ENCODE measurements at regions of chr10 and their contacts with region 1.

Region 1: DNA sequence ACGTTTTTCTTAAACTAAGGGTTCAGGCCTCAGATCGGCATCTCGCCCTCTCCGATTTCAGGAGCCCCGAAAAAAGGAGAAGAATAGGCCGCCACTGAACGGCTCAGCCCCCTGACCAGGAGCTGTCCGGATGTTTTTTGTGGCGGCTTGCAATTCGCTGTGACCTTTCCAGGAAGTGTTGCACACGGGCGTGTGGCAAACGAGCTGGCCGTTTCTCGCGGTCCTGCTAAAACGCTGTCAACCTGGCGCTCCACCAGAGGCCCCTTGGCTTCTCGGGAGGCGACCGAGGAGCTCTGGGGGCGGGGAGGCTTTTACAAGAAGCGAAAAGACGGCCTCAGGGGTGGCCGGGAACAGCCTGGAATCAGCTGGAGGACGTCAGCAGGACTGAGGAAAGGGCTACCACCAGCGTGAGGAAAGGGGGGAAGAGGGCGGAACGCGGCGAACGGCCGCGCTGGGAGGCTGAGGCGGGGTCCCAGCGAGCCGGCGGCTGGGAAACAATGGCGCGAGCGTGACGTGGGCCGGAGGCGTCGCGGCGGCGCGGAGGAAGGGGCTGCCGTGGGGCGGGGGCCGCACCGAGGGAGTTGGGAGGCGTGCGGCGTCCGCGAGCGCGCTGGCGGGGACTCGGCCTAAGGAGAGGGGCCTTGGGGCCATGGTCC is 493 bp downstream of the NT5C2 start:
- DNase-seq: peak; percentile 73
- H3K4me3 ChIP-seq: peak overlapping the region; percentile 84 to 89 (median 88)
- H3K27ac ChIP-seq: peak overlapping the region; percentile 86
- H3K4me1 ChIP-seq: peaks cover 7% of the 10 kb centered on the region
- H3K27me3 ChIP-seq: no peaks in the 10 kb centered on the region
- CTCF ChIP-seq: no peak

Region 2: DNA sequence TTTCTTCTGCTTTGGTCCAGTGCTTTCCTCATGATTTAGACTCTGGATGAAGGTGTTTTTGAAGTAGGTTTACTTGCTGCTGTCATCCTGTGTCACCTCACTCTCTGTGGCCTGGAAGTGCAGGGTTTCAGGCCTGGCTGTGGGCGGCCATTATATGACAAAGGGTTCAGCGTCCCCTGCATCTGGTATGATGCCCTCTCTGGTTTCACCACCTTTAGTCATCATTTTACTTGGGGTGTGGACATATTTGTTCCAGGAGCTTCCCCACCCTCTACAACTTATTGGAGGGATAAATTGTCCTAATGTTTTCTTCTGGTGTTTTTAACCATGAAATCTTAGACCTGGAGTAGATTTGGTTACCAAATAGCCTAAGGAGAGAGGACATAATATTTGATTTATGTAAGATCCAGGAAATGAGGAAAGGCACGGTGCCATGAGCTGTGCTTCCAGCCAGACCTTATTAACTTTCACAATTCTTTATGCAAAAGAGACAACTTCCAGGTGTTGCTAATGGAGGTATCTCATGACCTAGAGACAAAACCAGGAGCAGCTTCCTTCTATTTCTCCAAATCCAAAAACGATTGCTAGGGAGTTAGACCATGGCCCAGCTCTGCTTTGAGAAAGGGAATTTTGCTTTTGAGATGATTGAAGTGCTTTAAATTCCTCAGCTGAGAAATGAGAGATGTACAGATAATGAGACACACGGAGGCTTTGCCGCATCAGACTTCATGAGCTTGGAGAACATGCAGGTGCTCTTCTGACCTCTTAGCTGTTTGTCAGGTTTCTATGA is 428.0 kb before region 1 on chr10:
- CTCF ChIA-PET with region 1: no interaction called
- dilution Hi-C with region 1: no loop called
- in situ Hi-C with region 1: no loop called
- intact Hi-C with region 1: no loop called
- DNase-seq: no peak
- H3K4me3 ChIP-seq: no peak overlapping the region
- H3K27ac ChIP-seq: no peak overlapping the region
- H3K4me1 ChIP-seq: peaks cover 16% of the 10 kb centered on the region
- H3K27me3 ChIP-seq: no peaks in the 10 kb centered on the region
- CTCF ChIP-seq: no peak

Region 3: GRCh38 chr10:102988404-102989314 is 203.9 kb before region 1 on chr10:
- CTCF ChIA-PET with region 1: no interaction called
- dilution Hi-C with region 1: no loop called
- in situ Hi-C with region 1: no loop called
- intact Hi-C with region 1: no loop called
- DNase-seq: no peak
- H3K4me3 ChIP-seq: no peak overlapping the region
- H3K27ac ChIP-seq: no peak overlapping the region
- H3K4me1 ChIP-seq: no peaks in the 10 kb centered on the region
- H3K27me3 ChIP-seq: no peaks in the 10 kb centered on the region
- CTCF ChIP-seq: no peak

Region 4: GRCh38 chr10:103145860-103146466 is 46.6 kb before region 1 on chr10:
- CTCF ChIA-PET with region 1: no interaction called
- dilution Hi-C with region 1: loop called (anchors 10 kb)
- in situ Hi-C with region 1: no loop called
- intact Hi-C with region 1: no loop called
- DNase-seq: peak; percentile 45
- H3K4me3 ChIP-seq: no peak overlapping the region
- H3K27ac ChIP-seq: no peak overlapping the region
- H3K4me1 ChIP-seq: no peaks in the 10 kb centered on the region
- H3K27me3 ChIP-seq: no peaks in the 10 kb centered on the region
- CTCF ChIP-seq: no peak

Region 5: DNA sequence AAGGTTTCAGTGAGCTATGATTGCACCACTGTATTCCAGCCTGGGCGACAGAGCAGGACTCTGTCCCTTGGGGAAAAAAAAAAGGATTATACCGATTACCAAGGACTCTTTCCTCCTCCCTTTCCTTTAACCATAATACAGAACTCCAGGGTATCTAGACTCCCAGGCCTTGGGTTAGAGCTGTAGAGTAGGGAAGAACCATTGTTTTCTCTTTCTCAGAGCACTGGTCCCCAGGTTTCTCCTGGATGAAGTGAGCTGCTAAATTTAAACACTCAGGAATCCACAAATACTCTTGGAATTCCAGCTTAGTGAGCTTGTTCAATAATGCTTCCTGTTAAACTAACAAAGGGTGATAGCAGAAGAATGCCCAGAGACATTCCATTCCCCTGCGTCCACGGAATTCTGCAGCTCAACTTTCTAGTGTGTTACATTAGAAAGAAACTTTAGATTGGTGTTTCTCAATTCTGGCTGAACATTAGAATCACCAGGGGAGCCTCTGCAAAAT is 38.5 kb after region 1 on chr10:
- CTCF ChIA-PET with region 1: no interaction called
- dilution Hi-C with region 1: loop called (anchors 5 kb)
- in situ Hi-C with region 1: no loop called
- intact Hi-C with region 1: loop called (anchors 2 kb)
- DNase-seq: peak; percentile 84
- H3K4me3 ChIP-seq: no peak overlapping the region
- H3K27ac ChIP-seq: peak overlapping the region; percentile 71
- H3K4me1 ChIP-seq: peaks cover 42% of the 10 kb centered on the region
- H3K27me3 ChIP-seq: no peaks in the 10 kb centered on the region
- CTCF ChIP-seq: no peak

Region 6: DNA sequence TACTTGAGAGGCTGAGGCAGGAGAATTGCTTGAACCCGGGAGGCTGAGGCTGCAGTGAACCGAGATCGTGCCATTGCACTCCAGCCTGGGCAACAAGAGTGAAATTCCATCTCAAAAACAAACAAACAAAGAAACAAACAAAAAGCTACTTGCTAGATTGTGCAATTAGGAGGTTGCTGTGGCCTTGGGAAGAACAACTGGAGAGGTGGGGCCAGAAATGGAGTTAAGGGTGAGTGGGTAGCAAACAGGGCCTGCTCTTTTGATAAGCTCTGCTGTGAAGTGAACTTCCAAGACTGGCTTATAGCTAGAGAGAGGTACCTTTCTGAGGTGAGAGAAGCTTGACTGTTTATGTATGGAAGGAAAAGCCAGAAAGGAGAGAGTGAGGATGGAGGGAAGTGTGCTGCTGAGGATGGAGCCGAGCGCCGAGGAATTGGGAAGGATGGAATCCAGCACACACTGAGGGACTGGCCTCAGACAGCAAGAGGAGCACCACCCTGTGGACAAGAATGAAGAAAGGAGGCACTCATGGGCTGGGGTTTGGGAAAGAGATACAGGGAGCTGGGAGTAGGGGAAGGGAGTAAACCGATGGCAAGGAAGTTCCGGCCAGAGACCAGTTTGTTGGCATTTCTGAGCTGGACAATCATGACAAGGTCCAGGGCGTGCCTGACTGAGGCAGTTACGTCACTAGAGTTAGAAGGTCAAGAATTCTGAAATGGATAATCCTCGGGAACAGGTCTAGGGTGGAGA is 46.1 kb after region 1 on chr10:
- CTCF ChIA-PET with region 1: interaction called, 3 read pairs
- dilution Hi-C with region 1: loop called (anchors 5 kb)
- in situ Hi-C with region 1: no loop called
- intact Hi-C with region 1: no loop called
- DNase-seq: peak; percentile 49
- H3K4me3 ChIP-seq: no peak overlapping the region
- H3K27ac ChIP-seq: no peak overlapping the region
- H3K4me1 ChIP-seq: peaks cover 20% of the 10 kb centered on the region
- H3K27me3 ChIP-seq: no peaks in the 10 kb centered on the region
- CTCF ChIP-seq: peak in 1 of 2 donors; percentile 34

Measured in mammary epithelial cell (primary cell).